ENCODE measurements at regions of chr9 and their contacts with region 1.

Region 1: DNA sequence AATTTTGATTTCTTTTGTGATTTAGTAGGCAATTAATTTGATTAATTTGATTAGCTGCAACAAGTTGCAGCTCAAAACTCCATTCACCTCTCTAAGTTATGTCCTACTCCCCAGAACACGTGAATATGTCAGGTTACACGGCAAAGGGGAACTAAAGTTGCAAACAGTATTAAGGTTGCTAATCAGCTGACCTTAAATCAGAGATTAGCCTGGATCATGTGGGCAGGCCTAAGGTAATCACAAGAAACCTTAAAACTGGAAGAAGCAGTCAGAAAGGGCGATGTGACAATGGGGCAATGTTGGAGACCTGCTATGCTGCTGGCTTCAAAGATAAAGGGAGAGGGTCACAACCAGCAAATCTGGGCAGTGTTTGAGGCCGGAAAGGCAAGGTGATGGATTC is 47.3 kb upstream of the ANXA1 start:
- DNase-seq: no peak
- ATAC-seq: no peak; the same call in 2 of the 3 replicates
- H3K4me3 ChIP-seq: no peak overlapping the region
- H3K27ac ChIP-seq: no peak overlapping the region
- H3K4me1 ChIP-seq: no peaks in the 10 kb centered on the region
- H3K27me3 ChIP-seq: no peaks in the 10 kb centered on the region
- CTCF ChIP-seq: no peak
- EP300 ChIP-seq: no peak
- POLR2A ChIP-seq: no peak
- RAD21 ChIP-seq: no peak

Region 2: GRCh38 chr9:72925126-72925789 is 179.1 kb before region 1 on chr9:
- CTCF ChIA-PET with region 1: no interaction called
- POLR2A ChIA-PET with region 1: no interaction called
- in situ Hi-C with region 1: no loop called
- intact Hi-C with region 1: no loop called
- DNase-seq: no peak
- ATAC-seq: no peak
- H3K4me3 ChIP-seq: no peak overlapping the region
- H3K27ac ChIP-seq: no peak overlapping the region
- H3K4me1 ChIP-seq: no peaks in the 10 kb centered on the region
- H3K27me3 ChIP-seq: no peaks in the 10 kb centered on the region
- CTCF ChIP-seq: no peak
- EP300 ChIP-seq: no peak
- POLR2A ChIP-seq: no peak
- RAD21 ChIP-seq: no peak

Region 3: GRCh38 chr9:73093740-73094379 is 10.5 kb before region 1 on chr9:
- CTCF ChIA-PET with region 1: no interaction called
- POLR2A ChIA-PET with region 1: no interaction called
- in situ Hi-C with region 1: no loop called
- intact Hi-C with region 1: no loop called
- DNase-seq: no peak
- ATAC-seq: peak; percentile 50; the same call in 2 of the 3 replicates
- H3K4me3 ChIP-seq: no peak overlapping the region
- H3K27ac ChIP-seq: no peak overlapping the region
- H3K4me1 ChIP-seq: no peaks in the 10 kb centered on the region
- H3K27me3 ChIP-seq: no peaks in the 10 kb centered on the region
- CTCF ChIP-seq: no peak
- EP300 ChIP-seq: no peak
- POLR2A ChIP-seq: no peak
- RAD21 ChIP-seq: no peak

Region 4: GRCh38 chr9:73183917-73184861 is 79.8 kb after region 1 on chr9:
- CTCF ChIA-PET with region 1: interaction called, 11 read pairs
- POLR2A ChIA-PET with region 1: no interaction called
- in situ Hi-C with region 1: loop called (anchors 5 kb)
- intact Hi-C with region 1: loop called (anchors 1 kb)
- DNase-seq: peak in 3 of 4 experiments; percentile 10 to 38 (median 11)
- ATAC-seq: 0 out of 3 replicates have a peak, but pooled peaks have one; percentile 48
- H3K4me3 ChIP-seq: no peak overlapping the region
- H3K27ac ChIP-seq: no peak overlapping the region; the same call in 2 of the 3 replicates
- H3K4me1 ChIP-seq: no peaks in the 10 kb centered on the region
- H3K27me3 ChIP-seq: no peaks in the 10 kb centered on the region
- CTCF ChIP-seq: peak in 2 of 3 experiments; percentile 14 to 57; a peak in 3 of 6 replicates
- EP300 ChIP-seq: no peak
- POLR2A ChIP-seq: no peak
- RAD21 ChIP-seq: peak; percentile 74

Measured in K562 (cell line).